ENCODE measurements at regions of chrX and their contacts with region 1.

Region 1: DNA sequence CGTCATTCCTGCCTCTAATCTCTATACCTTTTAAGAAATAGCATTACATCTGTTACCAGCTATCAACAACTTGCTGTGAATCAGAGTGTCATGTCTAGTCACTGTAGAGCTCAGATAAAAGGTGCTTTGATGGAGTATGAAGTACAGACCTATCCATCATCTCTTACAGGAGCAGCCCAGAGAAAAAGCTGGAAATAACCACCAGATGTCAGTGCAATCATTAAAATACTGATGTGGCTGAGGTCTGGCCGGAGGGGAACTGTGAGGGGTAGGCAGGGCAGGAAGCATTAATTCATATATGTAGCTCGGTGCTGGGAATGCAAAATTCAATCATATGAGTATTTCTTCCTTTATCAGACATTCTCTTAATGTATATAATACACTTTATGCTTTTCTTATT is 100.6 kb downstream of the AKAP4 start:
- DNase-seq: peak; percentile 41 to 66 (median 60)
- H3K4me3 ChIP-seq: no peak overlapping the region
- H3K27ac ChIP-seq: no peak overlapping the region
- H3K4me1 ChIP-seq: peaks cover 0 to 1% (median 0%) of the 10 kb centered on the region in 4 experiments
- H3K27me3 ChIP-seq: peaks cover 0 to 2% (median 0%) of the 10 kb centered on the region in 5 experiments

Region 2: DNA sequence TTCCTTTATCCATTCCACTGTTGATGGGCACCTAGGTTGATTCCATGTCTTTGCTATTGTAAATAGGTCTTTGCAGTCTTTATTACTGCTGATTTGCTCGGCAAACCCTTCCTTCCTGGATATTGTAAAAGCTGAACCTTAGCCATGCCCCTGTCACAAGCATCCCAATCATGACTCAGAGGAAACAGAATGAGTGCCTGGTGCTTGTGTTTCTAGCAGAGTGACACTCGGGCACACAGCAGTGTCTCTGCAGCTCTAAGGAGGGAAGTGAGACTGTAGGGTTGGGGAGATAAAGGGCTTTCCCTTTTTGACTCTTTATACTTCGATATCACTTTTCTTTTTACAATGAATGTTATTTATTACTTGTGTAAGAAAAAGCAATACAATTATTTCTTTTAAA is 17.3 kb after region 1 on chrX:
- CTCF ChIA-PET with region 1: interaction called, 16 read pairs
- POLR2A ChIA-PET with region 1: no interaction called
- DNase-seq: peak in 2 of 3 donors; percentile 74 to 82
- H3K4me3 ChIP-seq: no peak overlapping the region
- H3K27ac ChIP-seq: no peak overlapping the region
- H3K4me1 ChIP-seq: peaks cover 0 to 8% (median 0%) of the 10 kb centered on the region in 4 experiments
- H3K27me3 ChIP-seq: no peaks in the 10 kb centered on the region

Region 3: DNA sequence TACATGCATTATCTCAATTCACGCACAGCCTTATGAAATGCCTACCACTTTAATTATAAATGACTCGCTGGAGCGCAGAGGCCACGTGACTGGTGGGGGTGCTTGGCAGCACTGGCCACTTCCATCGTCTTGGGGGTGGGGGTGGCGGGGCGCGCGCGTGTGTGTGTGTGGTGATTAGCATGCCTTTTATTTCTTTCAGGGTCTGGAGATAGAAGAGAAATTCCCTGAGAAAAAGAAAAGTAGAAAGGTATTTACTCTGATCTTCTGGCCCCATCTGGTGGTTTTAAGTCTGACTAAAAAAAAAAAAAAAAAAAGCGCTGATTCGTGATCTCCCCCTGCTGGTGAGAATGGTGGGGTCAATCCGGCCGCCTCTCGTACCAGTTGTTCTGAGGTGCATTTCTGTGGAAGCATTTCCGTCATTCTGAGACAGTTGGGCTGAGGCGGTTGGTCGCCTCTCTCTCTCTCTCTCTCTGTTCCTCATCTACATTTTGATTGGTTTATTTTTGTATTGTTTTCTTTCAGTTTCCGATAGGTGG is 104.2 kb after region 1 on chrX and contains the start of gene CCNB3:
- CTCF ChIA-PET with region 1: interaction called, 66 read pairs
- POLR2A ChIA-PET with region 1: no interaction called
- DNase-seq: peak; percentile 83 to 93 (median 93)
- H3K4me3 ChIP-seq: peak within 1 kb of the TSS in 3 of 7 experiments; percentile 25 to 37 (median 36)
- H3K27ac ChIP-seq: peak within 1 kb of the TSS in 1 of 2 experiments; percentile 9
- H3K4me1 ChIP-seq: peaks cover 0 to 4% (median 2%) of the 10 kb centered on the region in 4 experiments
- H3K27me3 ChIP-seq: no peaks in the 10 kb centered on the region

Region 4: DNA sequence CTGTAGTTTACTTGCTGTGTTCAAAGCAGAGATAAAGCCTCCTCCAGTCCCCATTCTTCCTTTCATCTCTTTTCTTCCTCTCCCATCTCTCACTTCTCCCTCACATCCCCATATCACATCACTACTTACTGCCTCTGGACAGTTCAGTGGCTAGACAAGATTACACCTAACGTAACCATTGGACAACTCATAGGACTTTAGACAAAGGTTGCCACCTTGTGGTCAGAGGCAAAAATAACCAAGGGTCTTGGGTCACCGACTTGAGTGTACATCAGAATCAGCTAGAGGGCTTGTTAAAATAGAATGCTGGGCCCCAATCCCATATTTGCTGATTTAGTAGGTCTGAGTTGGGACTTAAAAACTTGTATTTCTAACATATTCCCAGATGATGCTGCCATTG is 479.8 kb after region 1 on chrX:
- CTCF ChIA-PET with region 1: interaction called, 28 read pairs
- POLR2A ChIA-PET with region 1: no interaction called
- DNase-seq: peak; percentile 38 to 68 (median 64)
- H3K4me3 ChIP-seq: no peak overlapping the region
- H3K27ac ChIP-seq: no peak overlapping the region
- H3K4me1 ChIP-seq: no peaks in the 10 kb centered on the region
- H3K27me3 ChIP-seq: no peaks in the 10 kb centered on the region

Measured in common myeloid progenitor, CD34-positive (primary cell).